Sciatic nerve (tissue), 2 donors: ENCODE measurements at regions of chr22 and their contacts with region 1.

Region 1: DNA sequence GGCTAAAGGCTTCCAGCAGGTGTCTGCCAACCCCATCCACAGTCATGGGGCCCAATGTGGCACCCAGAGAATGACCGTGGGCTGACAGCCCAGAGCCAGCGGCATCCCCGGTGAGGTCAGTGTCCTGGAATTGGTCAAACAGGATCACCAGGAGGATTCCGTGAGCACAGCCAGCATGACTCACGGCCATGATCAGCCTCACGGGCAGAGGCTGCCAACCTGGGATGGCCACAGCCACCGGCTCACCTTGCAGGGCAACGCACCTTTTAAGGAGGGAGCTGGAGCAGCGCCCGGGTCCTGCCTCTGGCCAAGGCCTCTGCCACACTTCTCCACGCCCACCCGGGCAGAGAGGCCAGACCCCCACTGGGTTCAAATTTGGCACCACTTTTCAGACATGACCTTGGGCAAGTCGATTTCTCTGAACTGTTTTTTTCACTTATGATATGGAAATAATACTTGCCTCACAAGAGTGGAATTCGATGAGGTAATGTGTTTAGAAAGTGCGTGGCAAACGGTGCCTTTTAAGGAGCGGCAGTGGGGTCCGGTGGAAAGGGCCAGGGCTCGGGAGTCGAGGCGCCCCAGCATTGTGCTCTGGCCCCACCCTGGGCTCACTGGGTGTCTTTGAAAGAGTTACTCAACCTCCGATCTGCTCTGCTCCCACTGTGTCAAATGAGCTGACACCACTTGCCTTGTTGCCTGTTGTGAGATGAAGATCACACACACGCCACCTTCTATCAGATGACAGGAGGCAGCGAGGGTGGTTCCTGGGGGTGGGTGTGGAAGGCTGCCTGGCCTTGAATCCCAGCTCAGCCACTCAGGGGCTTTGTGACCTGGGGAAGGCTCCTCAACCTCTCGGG is 16.0 kb downstream of the TXN2 start:
- DNase-seq: no peak
- ATAC-seq: peak; percentile 20

Region 2: DNA sequence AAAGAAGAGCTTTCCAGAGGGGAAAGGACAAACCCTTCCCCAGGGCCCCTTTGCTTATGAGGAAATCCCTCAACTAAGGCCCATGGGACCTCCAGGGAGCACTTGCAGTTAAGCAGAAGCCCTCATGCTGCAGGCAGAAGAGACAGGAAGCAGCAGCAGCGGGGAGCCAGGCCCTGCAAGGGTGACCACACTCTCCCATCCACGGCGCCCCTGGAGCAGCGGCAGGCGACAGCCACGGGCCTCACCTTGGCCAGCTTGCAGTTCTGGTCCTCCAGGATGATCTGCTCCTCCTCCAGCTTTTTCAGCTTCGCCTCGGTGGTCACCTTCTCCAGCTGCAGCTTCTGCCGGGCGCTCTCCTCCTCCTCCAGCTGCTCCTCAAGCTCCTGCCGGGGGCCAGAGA is 165.5 kb before region 1 on chr22:
- intact Hi-C with region 1: loop called (anchors 1 kb)
- DNase-seq: no peak
- ATAC-seq: no peak

Region 3: GRCh38 chr22:36311386-36312358 is 153.7 kb before region 1 on chr22:
- intact Hi-C with region 1: loop called (anchors 5 kb)
- DNase-seq: no peak
- ATAC-seq: no peak

Region 4: GRCh38 chr22:36846949-36847348 is 381.6 kb after region 1 on chr22:
- intact Hi-C with region 1: no loop called
- DNase-seq: no peak
- ATAC-seq: no peak